Caco-2 (cell line): ENCODE measurements at regions of chr10 and their contacts with region 1.

Region 1: GRCh38 chr10:60733189-60733822 is 45.0 kb upstream of the CDK1 start:
- DNase-seq: peak; percentile 87 to 94
- H3K4me3 ChIP-seq: peak overlapping the region; percentile 94
- H3K4me3 Mint-ChIP-seq: peak overlapping the region; percentile 81
- H3K27ac Mint-ChIP-seq: peak overlapping the region; percentile 45
- H3K4me1 ChIP-seq: peaks cover 22% of the 10 kb centered on the region
- H3K4me1 Mint-ChIP-seq: peaks cover 21% of the 10 kb centered on the region
- H3K27me3 ChIP-seq: no peaks in the 10 kb centered on the region
- H3K27me3 Mint-ChIP-seq: no peaks in the 10 kb centered on the region
- CTCF ChIP-seq: peak; percentile 47 to 91

Region 2: GRCh38 chr10:60669491-60669890 is 63.8 kb before region 1 on chr10:
- CTCF ChIA-PET with region 1: no interaction called
- POLR2A ChIA-PET with region 1: no interaction called
- intact Hi-C with region 1: loop called (anchors 2 kb)
- DNase-seq: no peak
- H3K4me3 ChIP-seq: no peak overlapping the region
- H3K4me3 Mint-ChIP-seq: no peak overlapping the region
- H3K27ac Mint-ChIP-seq: no peak overlapping the region
- H3K4me1 ChIP-seq: 0 out of 2 replicates have a peak, but pooled peaks cover 3% of the 10 kb centered on the region
- H3K4me1 Mint-ChIP-seq: no peaks in the 10 kb centered on the region
- H3K27me3 ChIP-seq: no peaks in the 10 kb centered on the region
- H3K27me3 Mint-ChIP-seq: no peaks in the 10 kb centered on the region
- CTCF ChIP-seq: no peak

Region 3: GRCh38 chr10:60704480-60704879 is 28.8 kb before region 1 on chr10:
- CTCF ChIA-PET with region 1: no interaction called
- POLR2A ChIA-PET with region 1: no interaction called
- intact Hi-C with region 1: loop called (anchors 1 kb)
- DNase-seq: peak in 1 of 2 experiments; percentile 64
- H3K4me3 ChIP-seq: no peak overlapping the region
- H3K4me3 Mint-ChIP-seq: peak overlapping the region; percentile 23
- H3K27ac Mint-ChIP-seq: peak overlapping the region; percentile 19
- H3K4me1 ChIP-seq: peaks cover 50% of the 10 kb centered on the region
- H3K4me1 Mint-ChIP-seq: peaks cover 50% of the 10 kb centered on the region
- H3K27me3 ChIP-seq: no peaks in the 10 kb centered on the region
- H3K27me3 Mint-ChIP-seq: no peaks in the 10 kb centered on the region
- CTCF ChIP-seq: no peak

Region 4: DNA sequence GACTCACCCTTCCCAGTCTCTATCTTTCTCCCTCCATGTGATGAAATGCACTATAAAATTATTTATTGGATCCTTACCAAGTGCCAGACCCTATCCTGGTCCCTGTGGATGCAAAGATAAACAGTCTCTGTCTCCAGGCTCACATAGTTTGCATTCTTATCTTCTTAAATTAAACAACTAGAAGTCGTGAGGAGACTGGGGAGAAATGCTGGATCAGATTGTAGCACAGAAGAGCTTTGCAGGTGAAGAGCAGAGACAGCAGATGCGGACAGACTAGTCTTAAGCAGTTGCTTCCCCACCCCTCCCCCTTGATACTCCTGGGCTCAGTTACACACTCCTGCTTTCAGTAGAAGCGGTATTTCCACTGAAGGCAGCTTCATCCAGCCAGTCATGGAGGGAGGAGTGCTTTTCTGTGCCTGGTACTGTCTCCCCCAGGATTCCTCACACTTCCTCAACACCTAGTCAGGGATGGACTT is 24.2 kb after region 1 on chr10:
- CTCF ChIA-PET with region 1: interaction called, 3 read pairs
- POLR2A ChIA-PET with region 1: no interaction called
- intact Hi-C with region 1: loop called (anchors 1 kb)
- DNase-seq: peak; percentile 58 to 80
- H3K4me3 ChIP-seq: no peak overlapping the region
- H3K4me3 Mint-ChIP-seq: peak overlapping the region; percentile 14
- H3K27ac Mint-ChIP-seq: no peak overlapping the region
- H3K4me1 ChIP-seq: peaks cover 13% of the 10 kb centered on the region
- H3K4me1 Mint-ChIP-seq: peaks cover 14% of the 10 kb centered on the region
- H3K27me3 ChIP-seq: no peaks in the 10 kb centered on the region
- H3K27me3 Mint-ChIP-seq: no peaks in the 10 kb centered on the region
- CTCF ChIP-seq: no peak

Region 5: GRCh38 chr10:60769406-60769805 is 36.1 kb after region 1 on chr10:
- CTCF ChIA-PET with region 1: interaction called, 3 read pairs
- POLR2A ChIA-PET with region 1: no interaction called
- intact Hi-C with region 1: loop called (anchors 1 kb)
- DNase-seq: no peak
- H3K4me3 ChIP-seq: no peak overlapping the region
- H3K4me3 Mint-ChIP-seq: peak overlapping the region; percentile 7
- H3K27ac Mint-ChIP-seq: no peak overlapping the region
- H3K4me1 ChIP-seq: peaks cover 10% of the 10 kb centered on the region
- H3K4me1 Mint-ChIP-seq: peaks cover 10% of the 10 kb centered on the region
- H3K27me3 ChIP-seq: no peaks in the 10 kb centered on the region
- H3K27me3 Mint-ChIP-seq: no peaks in the 10 kb centered on the region
- CTCF ChIP-seq: peak in 1 of 2 experiments; percentile 2

Region 6: GRCh38 chr10:60778214-60779029 is 45.1 kb after region 1 on chr10 and contains the start of gene CDK1:
- CTCF ChIA-PET with region 1: interaction called, 5 read pairs
- POLR2A ChIA-PET with region 1: interaction called, 4 read pairs
- intact Hi-C with region 1: loop called (anchors 2 kb)
- DNase-seq: peak; percentile 100
- H3K4me3 ChIP-seq: peak within 1 kb of the TSS; percentile 92
- H3K4me3 Mint-ChIP-seq: peak within 1 kb of the TSS; percentile 92
- H3K27ac Mint-ChIP-seq: peak within 1 kb of the TSS; percentile 96
- H3K4me1 ChIP-seq: peaks cover 22% of the 10 kb centered on the region
- H3K4me1 Mint-ChIP-seq: peaks cover 24% of the 10 kb centered on the region
- H3K27me3 ChIP-seq: no peaks in the 10 kb centered on the region
- H3K27me3 Mint-ChIP-seq: no peaks in the 10 kb centered on the region
- CTCF ChIP-seq: no peak
- total RNA-seq, gene CDK1: 193 and 199 TPM in 2 replicates

Region 7: GRCh38 chr10:60789340-60789739 is 56.0 kb after region 1 on chr10:
- CTCF ChIA-PET with region 1: no interaction called
- POLR2A ChIA-PET with region 1: no interaction called
- intact Hi-C with region 1: no loop called
- DNase-seq: no peak
- H3K4me3 ChIP-seq: no peak overlapping the region
- H3K4me3 Mint-ChIP-seq: no peak overlapping the region
- H3K27ac Mint-ChIP-seq: no peak overlapping the region
- H3K4me1 ChIP-seq: no peaks in the 10 kb centered on the region
- H3K4me1 Mint-ChIP-seq: peaks cover 6% of the 10 kb centered on the region
- H3K27me3 ChIP-seq: no peaks in the 10 kb centered on the region
- H3K27me3 Mint-ChIP-seq: no peaks in the 10 kb centered on the region
- CTCF ChIP-seq: no peak